Activated naive CD4-positive, alpha-beta T cell treated with anti-CD3 and anti-CD28 coated beads, Interleukin-2, amount 10 ng/mL, durations not matched to agents 7 days and 5 days (primary cell): ENCODE measurements at regions of chr7 and their contacts with region 1.

Region 1: DNA sequence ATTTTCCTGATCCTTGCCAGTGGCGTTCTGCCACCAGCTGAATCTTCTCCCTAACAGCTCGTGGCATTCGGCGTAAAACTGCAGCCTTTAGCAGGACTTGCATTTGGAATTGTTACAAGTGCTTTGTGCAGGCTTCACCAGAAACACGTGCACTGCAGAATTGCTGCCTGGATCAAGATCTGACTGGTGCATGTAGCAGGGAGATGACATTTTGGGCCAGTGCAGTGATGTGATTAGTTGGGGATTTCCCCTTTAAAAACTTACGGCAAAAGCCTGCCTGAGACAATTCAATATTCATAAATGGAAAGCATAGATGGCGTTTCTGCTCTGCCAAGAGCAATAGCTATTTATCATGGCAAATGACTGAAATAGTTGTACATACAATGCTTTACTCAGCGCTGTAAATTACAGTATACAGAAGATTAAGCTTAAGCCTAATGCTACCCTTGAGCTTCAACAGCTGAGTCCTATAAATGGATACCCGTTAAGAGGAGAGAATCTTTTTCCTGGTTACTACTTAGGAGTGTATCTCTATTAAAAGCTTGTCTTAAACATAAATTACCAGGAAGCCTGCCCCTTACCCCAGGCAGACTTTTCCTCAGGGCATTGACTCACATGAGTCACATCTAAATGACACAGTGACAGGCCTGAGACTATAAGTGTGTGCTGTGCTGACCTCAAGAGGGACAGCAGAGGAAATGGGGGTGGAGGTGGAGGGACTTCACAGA is 106.3 kb downstream of the ATXN7L1 start:
- DNase-seq: no peak
- H3K4me3 Mint-ChIP-seq: no peak overlapping the region
- H3K27ac Mint-ChIP-seq: no peak overlapping the region
- H3K4me1 Mint-ChIP-seq: peaks cover 3% of the 10 kb centered on the region
- H3K27me3 Mint-ChIP-seq: peaks cover 6% of the 10 kb centered on the region

Region 2: DNA sequence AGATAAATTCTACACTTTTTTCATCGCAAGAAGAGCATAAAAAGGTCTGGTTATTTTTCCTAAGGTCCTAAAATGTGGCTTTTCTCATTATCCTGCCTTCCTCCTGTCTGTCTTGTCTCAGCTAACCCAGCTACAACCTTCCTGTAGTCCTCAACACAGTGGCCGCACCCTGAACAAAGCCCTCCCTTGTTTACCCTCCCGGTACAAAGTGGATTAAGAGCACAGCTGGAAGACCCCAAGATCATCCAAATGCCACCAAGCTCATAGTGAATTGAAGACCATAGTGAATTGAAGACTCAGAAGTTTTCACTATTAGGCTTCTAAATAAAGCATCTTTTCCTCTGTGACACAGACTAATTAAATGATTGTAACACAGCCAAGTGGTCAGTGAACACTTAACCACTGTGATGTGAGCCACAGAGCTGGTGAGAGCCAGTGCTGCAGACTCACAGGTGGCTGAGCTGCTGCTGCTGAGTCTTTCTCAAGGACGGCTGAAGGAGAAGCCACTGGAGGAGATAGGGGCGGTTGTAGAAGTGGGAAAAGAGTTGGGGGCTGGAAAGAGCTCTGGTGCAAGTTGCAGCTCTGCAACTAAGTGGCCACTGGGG is 17.3 kb before region 1 on chr7:
- CTCF ChIA-PET with region 1: no interaction called
- DNase-seq: no peak
- H3K4me3 Mint-ChIP-seq: no peak overlapping the region
- H3K27ac Mint-ChIP-seq: no peak overlapping the region
- H3K4me1 Mint-ChIP-seq: no peaks in the 10 kb centered on the region
- H3K27me3 Mint-ChIP-seq: peaks cover 11% of the 10 kb centered on the region

Region 3: DNA sequence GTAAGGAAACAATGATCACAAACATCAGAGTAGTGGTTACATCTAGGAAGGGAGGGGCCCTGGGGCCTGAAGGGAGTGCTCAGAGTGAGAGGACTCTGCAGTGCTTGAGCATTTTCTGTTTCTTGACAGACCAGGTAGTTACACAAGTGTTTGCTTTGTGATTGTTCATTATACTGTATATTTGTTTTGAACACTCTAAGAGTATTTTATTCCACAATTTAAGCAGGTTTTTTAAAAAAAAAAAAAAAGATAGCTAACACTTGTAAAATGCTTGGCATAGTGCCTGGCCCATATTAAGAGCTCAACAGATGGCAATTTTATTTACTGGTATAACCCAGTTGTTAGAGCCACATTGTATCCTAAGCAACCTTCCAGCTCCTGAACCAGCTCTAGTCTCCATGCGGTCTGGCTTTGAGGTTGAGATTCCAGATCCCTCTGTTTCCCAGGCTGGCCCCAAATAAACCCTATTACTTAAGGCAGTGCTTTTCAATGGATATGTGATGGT is 126.4 kb after region 1 on chr7:
- CTCF ChIA-PET with region 1: no interaction called
- DNase-seq: peak; percentile 40
- H3K4me3 Mint-ChIP-seq: no peak overlapping the region
- H3K27ac Mint-ChIP-seq: no peak overlapping the region
- H3K4me1 Mint-ChIP-seq: peaks cover 21% of the 10 kb centered on the region
- H3K27me3 Mint-ChIP-seq: peaks cover 10% of the 10 kb centered on the region

Region 4: GRCh38 chr7:106041140-106041717 is 271.2 kb after region 1 on chr7:
- CTCF ChIA-PET with region 1: interaction called, 11 read pairs
- DNase-seq: peak; percentile 46
- H3K4me3 Mint-ChIP-seq: no peak overlapping the region
- H3K27ac Mint-ChIP-seq: no peak overlapping the region
- H3K4me1 Mint-ChIP-seq: peaks cover 33% of the 10 kb centered on the region
- H3K27me3 Mint-ChIP-seq: peaks cover 57% of the 10 kb centered on the region